PC-9 (cell line): ENCODE measurements at regions of chr4 and their contacts with region 1.

Region 1: DNA sequence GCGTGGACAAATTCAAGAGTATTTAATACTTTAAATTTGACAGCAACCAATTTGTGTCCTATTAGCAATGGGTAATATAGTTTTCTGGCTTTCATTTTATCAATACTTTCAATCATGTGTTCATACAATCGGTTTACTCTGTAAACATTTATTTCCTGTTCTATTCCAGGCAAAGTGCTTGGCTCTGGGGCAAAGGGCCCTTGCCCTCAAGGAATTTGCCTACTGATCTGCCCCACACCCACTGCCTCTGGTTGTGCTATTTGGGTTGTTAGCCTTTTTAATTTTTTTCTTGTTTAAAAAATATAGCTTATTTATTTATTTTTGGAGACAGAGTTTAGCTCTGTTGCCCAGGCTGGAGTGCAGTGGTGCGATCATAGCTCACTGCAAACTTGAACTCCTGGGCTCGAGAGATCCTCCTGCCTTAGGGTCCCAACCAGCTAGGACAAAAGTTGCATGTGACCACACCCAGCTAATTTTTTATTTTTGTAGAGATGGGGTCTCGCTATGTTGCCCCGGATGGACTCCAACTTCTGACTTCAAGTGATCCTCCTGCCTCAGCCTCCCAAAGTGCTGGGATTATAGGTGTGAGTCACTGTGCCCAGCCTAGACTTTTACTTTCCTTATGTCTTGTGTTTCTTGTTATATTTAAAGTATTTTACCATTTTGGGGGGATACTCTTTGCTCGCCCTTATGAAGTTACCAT is 30.7 kb upstream of the CBR4 start:
- DNase-seq: no peak
- H3K4me3 ChIP-seq: 0 out of 2 replicates have a peak overlapping the region, but pooled peaks have one; percentile 26
- H3K27ac ChIP-seq: no peak overlapping the region
- H3K4me1 ChIP-seq: peaks cover 22% of the 10 kb centered on the region
- H3K27me3 ChIP-seq: no peaks in the 10 kb centered on the region
- CTCF ChIP-seq: no peak

Region 2: GRCh38 chr4:167897116-167897515 is 1143.6 kb before region 1 on chr4:
- CTCF ChIA-PET with region 1: no interaction called
- POLR2A ChIA-PET with region 1: interaction called, 17 read pairs
- intact Hi-C with region 1: no loop called
- DNase-seq: peak in 1 of 2 experiments; percentile 51
- H3K4me3 ChIP-seq: no peak overlapping the region
- H3K27ac ChIP-seq: no peak overlapping the region
- H3K4me1 ChIP-seq: no peaks in the 10 kb centered on the region
- H3K27me3 ChIP-seq: no peaks in the 10 kb centered on the region
- CTCF ChIP-seq: no peak

Region 3: GRCh38 chr4:168847771-168848511 is 192.8 kb before region 1 on chr4:
- CTCF ChIA-PET with region 1: no interaction called
- POLR2A ChIA-PET with region 1: no interaction called
- intact Hi-C with region 1: no loop called
- DNase-seq: no peak
- H3K4me3 ChIP-seq: no peak overlapping the region
- H3K27ac ChIP-seq: no peak overlapping the region
- H3K4me1 ChIP-seq: no peaks in the 10 kb centered on the region
- H3K27me3 ChIP-seq: no peaks in the 10 kb centered on the region
- CTCF ChIP-seq: no peak